Uterus (tissue), 4 donors: ENCODE measurements at regions of chr11 and their contacts with region 1.

Region 1: GRCh38 chr11:75797792-75798191 is 17.2 kb upstream of the UVRAG start:
- DNase-seq: no peak
- H3K4me3 ChIP-seq: no peak overlapping the region
- H3K27ac ChIP-seq: no peak overlapping the region
- H3K4me1 ChIP-seq: no peaks in the 10 kb centered on the region
- H3K27me3 ChIP-seq: no peaks in the 10 kb centered on the region
- CTCF ChIP-seq: no peak
- POLR2A ChIP-seq: no peak

Region 2: DNA sequence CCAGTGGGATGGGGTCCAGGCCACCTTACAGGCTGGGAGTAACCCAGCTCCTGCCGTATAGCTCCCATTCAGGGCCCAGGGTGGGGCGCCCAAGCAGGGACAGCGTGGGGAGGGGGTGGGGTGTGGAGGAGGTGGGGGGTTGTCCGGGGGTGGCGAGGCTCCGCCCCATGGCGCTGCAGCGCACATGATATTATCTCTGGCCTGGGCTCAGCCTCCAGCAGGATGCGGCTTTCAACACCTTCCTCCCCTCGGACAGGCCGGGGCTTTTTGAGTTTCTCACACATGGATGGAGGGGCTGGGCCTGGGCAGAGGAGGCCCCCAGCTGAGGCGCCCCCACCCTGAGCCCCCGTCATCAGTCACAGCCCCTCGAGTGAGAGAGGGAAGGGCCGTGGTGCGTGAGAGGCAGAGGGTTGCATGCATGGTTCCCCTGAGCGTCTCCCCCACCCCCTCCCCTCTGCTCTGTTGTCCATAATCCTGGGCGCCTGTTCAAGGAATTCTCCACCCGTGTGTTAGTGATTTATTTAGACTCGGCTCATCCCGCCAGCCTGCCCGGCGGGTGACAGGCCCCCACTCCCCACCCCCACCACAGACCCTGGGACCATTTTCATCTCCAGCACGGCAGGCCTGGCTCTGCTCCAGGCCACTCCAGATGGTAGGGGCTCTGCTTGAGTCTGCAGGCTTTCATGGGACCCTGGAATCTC is 363.6 kb after region 1 on chr11:
- intact Hi-C with region 1: loop called (anchors 10 kb)
- DNase-seq: no peak
- H3K4me3 ChIP-seq: peak overlapping the region in 1 of 2 donors; percentile 27
- H3K27ac ChIP-seq: no peak overlapping the region
- H3K4me1 ChIP-seq: no peaks in the 10 kb centered on the region
- H3K27me3 ChIP-seq: no peaks in the 10 kb centered on the region
- CTCF ChIP-seq: no peak
- POLR2A ChIP-seq: no peak